CD4-positive, alpha-beta memory T cell (primary cell): ENCODE measurements at regions of chr1 and their contacts with region 1.

Region 1: GRCh38 chr1:181033799-181034451 is at the start of gene MR1:
- DNase-seq: peak; percentile 72 to 91 (median 87)
- H3K4me3 ChIP-seq: peak within 1 kb of the TSS; percentile 63 to 72
- H3K4me3 Mint-ChIP-seq: peak within 1 kb of the TSS; percentile 93 to 99 (median 98)
- H3K27ac ChIP-seq: peak within 1 kb of the TSS; percentile 92
- H3K27ac Mint-ChIP-seq: peak within 1 kb of the TSS; percentile 95 to 100 (median 99)
- H3K4me1 ChIP-seq: peaks cover 56% of the 10 kb centered on the region
- H3K4me1 Mint-ChIP-seq: peaks cover 47 to 64% (median 54%) of the 10 kb centered on the region in 4 donors
- H3K27me3 ChIP-seq: no peaks in the 10 kb centered on the region
- H3K27me3 Mint-ChIP-seq: no peaks in the 10 kb centered on the region
- total RNA-seq, gene MR1: 31.8 to 33.2 TPM

Region 2: DNA sequence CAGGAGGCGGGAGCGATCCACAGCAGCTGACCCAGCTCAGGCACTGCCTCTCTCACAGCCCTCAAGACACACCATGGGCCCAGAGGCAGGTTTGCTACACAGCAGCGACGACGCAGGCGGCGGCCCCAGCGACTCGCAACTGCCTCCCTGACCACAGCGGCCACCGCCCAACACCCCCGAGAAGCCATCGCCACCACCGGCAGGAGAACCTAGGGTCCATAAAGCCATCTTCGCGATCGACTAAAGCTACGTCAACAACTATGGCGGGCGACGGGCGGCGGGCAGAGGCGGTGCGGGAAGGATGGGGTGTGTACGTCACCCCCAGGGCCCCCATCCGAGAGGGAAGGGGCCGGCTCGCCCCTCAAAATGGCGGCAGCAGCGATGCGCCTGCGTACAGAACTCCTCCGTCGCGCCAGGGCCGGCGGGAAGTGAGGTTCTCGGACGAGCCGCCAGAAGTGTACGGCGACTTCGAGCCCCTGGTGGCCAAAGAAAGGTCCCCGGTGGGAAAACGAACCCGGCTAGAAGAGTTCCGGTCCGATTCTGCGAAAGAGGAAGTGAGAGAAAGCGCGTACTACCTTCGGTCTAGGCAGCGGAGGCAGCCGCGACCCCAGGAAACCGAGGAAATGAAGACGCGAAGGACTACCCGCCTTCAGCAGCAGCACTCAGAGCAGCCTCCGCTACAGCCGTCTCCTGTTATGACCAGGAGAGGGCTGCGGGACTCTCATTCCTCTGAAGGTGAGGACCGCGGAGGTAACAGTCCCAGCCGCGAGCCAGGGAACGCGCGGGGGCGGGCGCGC is 1151.5 kb before region 1 on chr1 and contains the start of gene TOR1AIP1:
- CTCF ChIA-PET with region 1: no interaction called
- POLR2A ChIA-PET with region 1: no interaction called
- intact Hi-C with region 1: loop called (anchors 1 kb)
- DNase-seq: peak; percentile 98 to 99 (median 98)
- H3K4me3 ChIP-seq: peak within 1 kb of the TSS; percentile 80 to 94
- H3K4me3 Mint-ChIP-seq: peak within 1 kb of the TSS; percentile 94 to 99 (median 96)
- H3K27ac ChIP-seq: peak within 1 kb of the TSS; percentile 99
- H3K27ac Mint-ChIP-seq: peak within 1 kb of the TSS; percentile 99 to 100 (median 100)
- H3K4me1 ChIP-seq: peaks cover 53% of the 10 kb centered on the region
- H3K4me1 Mint-ChIP-seq: peaks cover 31 to 77% (median 53%) of the 10 kb centered on the region in 4 donors
- H3K27me3 ChIP-seq: no peaks in the 10 kb centered on the region
- H3K27me3 Mint-ChIP-seq: no peaks in the 10 kb centered on the region
- total RNA-seq, gene TOR1AIP1: 53.8 to 61.0 TPM

Region 3: GRCh38 chr1:180640531-180640949 is 393.4 kb before region 1 on chr1:
- CTCF ChIA-PET with region 1: no interaction called
- POLR2A ChIA-PET with region 1: no interaction called
- intact Hi-C with region 1: no loop called
- DNase-seq: no peak
- H3K4me3 ChIP-seq: no peak overlapping the region
- H3K4me3 Mint-ChIP-seq: no peak overlapping the region
- H3K27ac ChIP-seq: no peak overlapping the region
- H3K27ac Mint-ChIP-seq: no peak overlapping the region
- H3K4me1 ChIP-seq: peaks cover 1% of the 10 kb centered on the region
- H3K4me1 Mint-ChIP-seq: peaks cover 25 to 42% (median 28%) of the 10 kb centered on the region in 4 donors
- H3K27me3 ChIP-seq: no peaks in the 10 kb centered on the region
- H3K27me3 Mint-ChIP-seq: no peaks in the 10 kb centered on the region

Region 4: DNA sequence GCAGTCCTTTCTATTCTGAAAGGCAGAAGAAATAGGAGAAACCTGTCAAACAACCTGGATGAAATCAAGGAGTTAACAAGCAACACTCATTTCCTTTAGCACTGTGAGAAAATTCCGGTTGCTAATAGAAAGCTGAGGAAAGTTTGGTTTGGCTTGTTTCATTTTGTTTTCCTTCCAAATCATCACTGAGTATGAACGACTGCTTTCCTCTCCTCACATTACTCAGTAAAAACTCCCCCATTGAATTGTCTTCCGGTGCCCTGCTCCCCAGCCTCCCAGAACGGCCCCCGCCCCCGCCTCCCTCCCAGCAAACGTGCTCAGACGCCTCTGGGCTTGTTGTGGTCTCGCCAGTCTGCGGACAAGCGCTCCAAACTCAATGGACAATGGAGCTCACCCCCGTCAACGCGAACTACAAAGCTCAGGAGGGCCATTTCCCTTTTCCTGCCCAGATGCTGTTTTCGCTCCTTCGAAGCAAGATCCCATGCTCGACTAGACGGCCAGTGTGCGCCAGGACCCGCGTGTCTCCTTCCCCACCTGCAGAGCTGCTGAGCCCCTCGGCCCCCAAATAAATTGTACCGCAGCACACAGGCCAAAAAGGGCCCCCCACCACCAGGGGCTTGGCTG is 12.0 kb before region 1 on chr1:
- CTCF ChIA-PET with region 1: interaction called, 20 read pairs
- POLR2A ChIA-PET with region 1: interaction called, 68 read pairs
- intact Hi-C with region 1: loop called (anchors 1 kb)
- DNase-seq: peak; percentile 26 to 79 (median 43)
- H3K4me3 ChIP-seq: peak overlapping the region; percentile 73 to 90
- H3K4me3 Mint-ChIP-seq: peak overlapping the region; percentile 95 to 98 (median 96)
- H3K27ac ChIP-seq: peak overlapping the region; percentile 75
- H3K27ac Mint-ChIP-seq: peak overlapping the region; percentile 93 to 100 (median 99)
- H3K4me1 ChIP-seq: peaks cover 51% of the 10 kb centered on the region
- H3K4me1 Mint-ChIP-seq: peaks cover 32 to 66% (median 41%) of the 10 kb centered on the region in 4 donors
- H3K27me3 ChIP-seq: no peaks in the 10 kb centered on the region
- H3K27me3 Mint-ChIP-seq: peaks cover 0 to 8% of the 10 kb centered on the region in 2 donors

Region 5: GRCh38 chr1:181105134-181106021 is 71.5 kb after region 1 on chr1:
- CTCF ChIA-PET with region 1: interaction called, 5 read pairs
- POLR2A ChIA-PET with region 1: interaction called, 11 read pairs
- intact Hi-C with region 1: no loop called
- DNase-seq: peak; percentile 90 to 94 (median 91)
- H3K4me3 ChIP-seq: peak overlapping the region in 1 of 2 donors; percentile 76
- H3K4me3 Mint-ChIP-seq: peak overlapping the region; percentile 87 to 97 (median 90)
- H3K27ac ChIP-seq: peak overlapping the region; percentile 79
- H3K27ac Mint-ChIP-seq: peak overlapping the region; percentile 92 to 98 (median 96)
- H3K4me1 ChIP-seq: peaks cover 56% of the 10 kb centered on the region
- H3K4me1 Mint-ChIP-seq: peaks cover 33 to 71% (median 50%) of the 10 kb centered on the region in 4 donors
- H3K27me3 ChIP-seq: no peaks in the 10 kb centered on the region
- H3K27me3 Mint-ChIP-seq: no peaks in the 10 kb centered on the region

Region 6: DNA sequence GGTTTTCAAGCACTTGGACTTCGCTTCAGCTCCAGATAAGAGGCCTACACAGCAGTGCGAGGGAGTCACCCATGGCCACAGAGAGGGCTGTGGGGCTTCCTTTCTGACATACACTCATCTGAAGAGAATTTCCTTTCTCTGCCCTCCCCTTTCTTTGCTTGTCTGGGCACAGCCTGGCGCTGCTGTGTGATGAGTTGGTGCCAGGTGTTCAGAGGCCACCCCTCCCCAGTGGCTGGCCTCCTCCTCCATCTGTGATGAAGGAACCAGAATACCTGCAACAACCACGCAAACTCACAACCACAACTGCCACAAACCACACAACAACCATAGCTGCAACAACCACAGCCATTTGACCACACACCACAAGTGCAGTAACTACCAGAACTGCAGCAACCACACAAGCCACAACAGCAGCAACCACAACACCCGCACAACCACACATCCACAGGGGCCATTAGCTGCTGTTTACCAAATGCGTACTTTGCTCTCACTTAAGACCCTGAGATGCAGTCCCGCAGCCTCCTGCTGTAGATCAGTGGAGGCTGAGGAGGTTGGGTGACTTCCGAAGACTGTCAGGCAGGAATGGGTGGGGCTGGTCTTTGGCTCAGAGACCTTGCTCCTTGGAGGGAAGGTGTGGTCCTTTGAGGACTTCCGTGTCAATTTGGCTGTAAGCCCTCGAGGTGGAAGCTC is 125.7 kb after region 1 on chr1:
- CTCF ChIA-PET with region 1: interaction called, 17 read pairs
- POLR2A ChIA-PET with region 1: interaction called, 14 read pairs
- intact Hi-C with region 1: no loop called
- DNase-seq: peak; percentile 72 to 84 (median 76)
- H3K4me3 ChIP-seq: peak overlapping the region in 1 of 2 donors; percentile 17
- H3K4me3 Mint-ChIP-seq: peak overlapping the region; percentile 65 to 83 (median 76)
- H3K27ac ChIP-seq: peak overlapping the region; percentile 16
- H3K27ac Mint-ChIP-seq: peak overlapping the region; percentile 91 to 98 (median 96)
- H3K4me1 ChIP-seq: peaks cover 40% of the 10 kb centered on the region
- H3K4me1 Mint-ChIP-seq: peaks cover 28 to 48% (median 39%) of the 10 kb centered on the region in 4 donors
- H3K27me3 ChIP-seq: no peaks in the 10 kb centered on the region
- H3K27me3 Mint-ChIP-seq: peaks cover 0 to 3% of the 10 kb centered on the region in 2 donors